Activated B cell treated with CpG ODN at 0.5 μM for 24 hours (primary cell): ENCODE measurements at regions of chr3 and their contacts with region 1.

Region 1: DNA sequence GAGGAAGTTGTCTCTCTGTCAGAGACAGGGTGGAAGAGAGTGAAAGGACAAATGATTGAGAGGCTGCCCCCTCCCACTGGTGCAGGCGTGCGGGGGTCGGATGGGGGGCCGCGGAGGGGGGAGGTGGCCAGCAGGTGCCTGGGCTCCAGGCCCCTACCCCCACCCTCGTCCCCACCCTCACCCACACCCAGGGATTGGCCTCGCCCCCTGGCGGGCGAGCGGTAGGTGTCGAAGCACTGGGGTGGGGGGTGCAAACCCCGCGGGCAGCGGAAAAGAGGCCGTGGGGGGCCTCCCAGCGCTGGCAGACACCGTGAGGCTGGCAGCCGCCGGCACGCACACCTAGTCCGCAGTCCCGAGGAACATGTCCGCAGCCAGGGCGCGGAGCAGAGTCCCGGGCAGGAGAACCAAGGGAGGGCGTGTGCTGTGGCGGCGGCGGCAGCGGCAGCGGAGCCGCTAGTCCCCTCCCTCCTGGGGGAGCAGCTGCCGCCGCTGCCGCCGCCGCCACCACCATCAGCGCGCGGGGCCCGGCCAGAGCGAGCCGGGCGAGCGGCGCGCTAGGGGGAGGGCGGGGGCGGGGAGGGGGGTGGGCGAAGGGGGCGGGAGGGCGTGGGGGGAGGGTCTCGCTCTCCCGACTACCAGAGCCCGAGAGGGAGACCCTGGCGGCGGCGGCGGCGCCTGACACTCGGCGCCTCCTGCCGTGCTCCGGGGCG is at the start of gene KAT2B:
- DNase-seq: peak; percentile 86
- ATAC-seq: peak; percentile 78
- H3K4me3 Mint-ChIP-seq: peak within 1 kb of the TSS; percentile 95
- H3K27ac Mint-ChIP-seq: peak within 1 kb of the TSS; percentile 94
- H3K4me1 Mint-ChIP-seq: peaks cover 53% of the 10 kb centered on the region
- H3K27me3 Mint-ChIP-seq: no peaks in the 10 kb centered on the region
- CTCF ChIP-seq: peak; percentile 21
- total RNA-seq, gene KAT2B: 35.9 and 36.8 TPM in 2 replicates

Region 2: DNA sequence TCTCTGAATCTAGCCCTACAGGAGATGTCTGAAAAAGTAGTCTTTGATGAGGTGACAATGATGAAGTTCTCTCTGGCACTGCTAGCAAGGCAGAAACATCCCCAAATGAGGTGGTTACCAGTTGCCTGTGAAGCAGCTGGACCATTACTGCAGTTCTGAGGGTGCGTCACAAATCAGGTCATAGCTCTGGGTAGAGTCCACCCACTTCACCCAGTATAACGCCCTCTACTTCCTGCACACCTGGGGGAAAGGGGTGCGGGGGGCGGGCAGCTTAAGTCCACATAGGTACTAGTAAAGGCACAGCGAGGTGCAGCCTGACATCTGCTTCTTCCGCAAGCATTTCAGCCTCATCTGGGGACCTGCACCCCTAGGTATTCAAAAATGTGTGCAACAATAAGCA is 1601.3 kb before region 1 on chr3:
- CTCF ChIA-PET with region 1: no interaction called
- POLR2A ChIA-PET with region 1: no interaction called
- intact Hi-C with region 1: loop called (anchors 1 kb)
- DNase-seq: peak; percentile 19
- ATAC-seq: peak; percentile 86
- H3K4me3 Mint-ChIP-seq: peak overlapping the region; percentile 24
- H3K27ac Mint-ChIP-seq: peak overlapping the region; percentile 65
- H3K4me1 Mint-ChIP-seq: peaks cover 52% of the 10 kb centered on the region
- H3K27me3 Mint-ChIP-seq: no peaks in the 10 kb centered on the region
- CTCF ChIP-seq: no peak

Region 3: DNA sequence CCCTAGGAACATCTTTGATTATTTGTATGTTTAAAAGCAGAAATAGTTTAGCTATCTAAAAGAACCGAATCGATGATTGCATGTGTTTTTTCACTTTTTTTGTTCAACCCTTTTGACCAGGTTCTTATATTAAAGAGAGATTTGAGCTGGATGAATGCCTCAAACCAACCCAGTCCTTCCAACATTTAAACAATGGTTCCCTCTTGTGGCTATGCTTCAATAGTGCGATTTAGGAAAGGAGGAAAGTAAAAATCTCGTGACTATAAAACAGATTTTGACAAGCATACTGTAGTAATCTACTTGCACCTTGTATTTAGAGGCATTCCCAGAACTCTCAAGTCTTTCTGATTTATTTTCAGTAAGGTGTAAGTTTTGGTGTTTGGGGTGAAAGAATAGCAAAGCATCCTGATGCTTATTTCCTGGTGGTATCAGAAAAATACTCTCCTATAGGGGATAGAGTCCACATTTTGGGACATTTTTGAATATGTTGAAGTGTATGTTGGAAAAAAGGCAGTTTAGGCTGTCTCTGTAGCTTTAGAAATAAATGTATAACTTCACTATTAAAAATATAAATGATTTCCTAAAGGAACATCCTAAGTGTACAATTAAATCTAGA is 1051.2 kb before region 1 on chr3:
- CTCF ChIA-PET with region 1: no interaction called
- POLR2A ChIA-PET with region 1: no interaction called
- intact Hi-C with region 1: no loop called
- DNase-seq: no peak
- ATAC-seq: no peak
- H3K4me3 Mint-ChIP-seq: no peak overlapping the region
- H3K27ac Mint-ChIP-seq: no peak overlapping the region
- H3K4me1 Mint-ChIP-seq: no peaks in the 10 kb centered on the region
- H3K27me3 Mint-ChIP-seq: peaks cover 2% of the 10 kb centered on the region
- CTCF ChIP-seq: no peak

Region 4: GRCh38 chr3:19213601-19214220 is 826.2 kb before region 1 on chr3:
- CTCF ChIA-PET with region 1: no interaction called
- POLR2A ChIA-PET with region 1: no interaction called
- intact Hi-C with region 1: loop called (anchors 10 kb)
- DNase-seq: no peak
- ATAC-seq: peak; percentile 74
- H3K4me3 Mint-ChIP-seq: no peak overlapping the region
- H3K27ac Mint-ChIP-seq: no peak overlapping the region
- H3K4me1 Mint-ChIP-seq: peaks cover 4% of the 10 kb centered on the region
- H3K27me3 Mint-ChIP-seq: no peaks in the 10 kb centered on the region
- CTCF ChIP-seq: no peak

Region 5: GRCh38 chr3:19543212-19543841 is 496.6 kb before region 1 on chr3:
- CTCF ChIA-PET with region 1: no interaction called
- POLR2A ChIA-PET with region 1: no interaction called
- intact Hi-C with region 1: loop called (anchors 5 kb)
- DNase-seq: peak; percentile 21
- ATAC-seq: peak; percentile 57
- H3K4me3 Mint-ChIP-seq: peak overlapping the region; percentile 21
- H3K27ac Mint-ChIP-seq: peak overlapping the region; percentile 95
- H3K4me1 Mint-ChIP-seq: peaks cover 69% of the 10 kb centered on the region
- H3K27me3 Mint-ChIP-seq: no peaks in the 10 kb centered on the region
- CTCF ChIP-seq: peak; percentile 27

Region 6: DNA sequence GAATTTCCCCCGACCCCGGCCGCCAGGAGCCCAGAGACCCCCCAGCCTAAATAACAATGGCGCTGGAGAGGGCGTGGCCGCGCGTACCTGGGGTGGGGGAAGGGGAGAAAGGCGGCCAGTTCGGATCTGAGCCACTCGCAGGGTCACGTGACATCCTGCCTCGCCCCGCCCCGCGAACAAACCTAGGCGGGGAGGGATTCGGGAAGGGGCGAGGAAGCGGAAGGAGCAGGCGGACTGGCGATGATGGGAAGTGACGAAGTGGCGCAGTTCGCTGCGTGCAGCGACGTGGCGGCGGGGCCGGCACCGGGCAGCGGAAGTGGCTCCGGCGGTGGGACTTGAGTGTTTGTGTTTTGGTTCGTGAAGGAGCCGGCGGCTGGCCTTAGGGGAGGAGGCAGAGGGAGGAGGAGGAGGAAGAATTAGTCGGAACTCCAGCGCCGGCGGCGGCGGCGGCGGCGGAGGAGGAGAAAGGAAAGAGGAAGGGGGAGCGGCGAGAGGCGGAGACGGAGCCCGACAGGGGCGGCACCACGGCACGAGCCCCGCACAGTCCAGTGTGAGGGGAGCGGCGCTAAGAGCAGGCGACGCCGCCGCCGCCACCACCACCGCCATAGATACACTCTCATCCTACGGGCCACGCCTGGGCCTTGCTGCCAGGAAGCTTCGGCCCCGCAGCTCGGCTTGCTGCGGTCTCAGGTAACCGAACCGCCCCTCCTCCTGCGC is 92.9 kb before region 1 on chr3 and contains the start of gene RAB5A:
- CTCF ChIA-PET with region 1: no interaction called
- POLR2A ChIA-PET with region 1: interaction called, 7 read pairs
- intact Hi-C with region 1: loop called (anchors 1 kb)
- DNase-seq: peak; percentile 95
- ATAC-seq: peak; percentile 87
- H3K4me3 Mint-ChIP-seq: peak within 1 kb of the TSS; percentile 94
- H3K27ac Mint-ChIP-seq: peak within 1 kb of the TSS; percentile 96
- H3K4me1 Mint-ChIP-seq: peaks cover 47% of the 10 kb centered on the region
- H3K27me3 Mint-ChIP-seq: no peaks in the 10 kb centered on the region
- CTCF ChIP-seq: no peak
- total RNA-seq, gene RAB5A: 43.2 and 45.2 TPM in 2 replicates

Region 7: DNA sequence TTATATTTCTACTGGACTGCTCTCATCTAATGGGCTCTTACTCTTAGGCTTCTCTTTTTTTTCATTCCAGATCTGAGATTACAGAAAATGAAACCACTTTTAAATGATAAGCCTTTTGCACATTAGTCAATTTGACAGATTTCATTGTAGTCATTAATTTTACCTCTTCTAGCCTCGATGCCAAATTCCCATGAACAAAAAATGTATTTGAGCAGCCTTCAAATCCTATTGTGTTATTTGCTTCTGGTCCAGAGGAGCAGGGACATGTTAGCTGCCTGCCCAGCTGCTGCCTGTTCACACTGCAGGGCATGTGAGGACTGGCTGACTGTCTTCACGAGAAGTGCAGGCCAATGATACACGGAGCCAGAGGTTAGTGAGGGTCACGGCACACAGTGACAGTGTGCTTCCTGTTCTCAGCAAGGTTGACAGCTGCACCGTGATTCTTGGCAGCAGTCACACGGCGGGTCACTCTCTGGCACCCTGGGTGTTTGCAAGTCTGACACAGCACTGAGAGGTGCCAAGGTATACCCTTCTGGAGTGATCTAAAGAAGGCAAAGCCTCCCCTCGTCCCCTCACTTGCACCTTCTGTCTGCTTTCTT is 41.1 kb after region 1 on chr3:
- CTCF ChIA-PET with region 1: no interaction called
- POLR2A ChIA-PET with region 1: no interaction called
- intact Hi-C with region 1: loop called (anchors 1 kb)
- DNase-seq: no peak
- ATAC-seq: peak; percentile 96
- H3K4me3 Mint-ChIP-seq: peak overlapping the region; percentile 57
- H3K27ac Mint-ChIP-seq: peak overlapping the region; percentile 71
- H3K4me1 Mint-ChIP-seq: peaks cover 18% of the 10 kb centered on the region
- H3K27me3 Mint-ChIP-seq: no peaks in the 10 kb centered on the region
- CTCF ChIP-seq: no peak

Region 8: GRCh38 chr3:20185701-20186598 is 146.0 kb after region 1 on chr3 and contains the start of gene SGO1:
- CTCF ChIA-PET with region 1: interaction called, 5 read pairs
- POLR2A ChIA-PET with region 1: interaction called, 38 read pairs
- intact Hi-C with region 1: loop called (anchors 1 kb)
- DNase-seq: peak; percentile 100
- ATAC-seq: peak; percentile 93
- H3K4me3 Mint-ChIP-seq: no peak within 1 kb of the TSS
- H3K27ac Mint-ChIP-seq: no peak within 1 kb of the TSS
- H3K4me1 Mint-ChIP-seq: no peaks in the 10 kb centered on the region
- H3K27me3 Mint-ChIP-seq: no peaks in the 10 kb centered on the region
- CTCF ChIP-seq: no peak
- total RNA-seq, gene SGO1: 5.9 and 7.2 TPM in 2 replicates